ENCODE measurements at regions of chr7 and their contacts with region 1.

Region 1: GRCh38 chr7:55255496-55256435 is 109.4 kb upstream of the LANCL2 start:
- DNase-seq: peak; percentile 59
- ATAC-seq: peak; percentile 91
- H3K4me3 ChIP-seq: peak overlapping the region; percentile 56 to 88
- H3K27ac ChIP-seq: peak overlapping the region; percentile 80
- H3K4me1 ChIP-seq: peaks cover 7% of the 10 kb centered on the region
- H3K27me3 ChIP-seq: peaks cover 3% of the 10 kb centered on the region; the same call in 1 of the 2 replicates
- CTCF ChIP-seq: peak; percentile 97

Region 2: GRCh38 chr7:54773472-54774399 is 482.0 kb before region 1 on chr7:
- CTCF ChIA-PET with region 1: interaction called, 23 read pairs
- POLR2A ChIA-PET with region 1: no interaction called
- in situ Hi-C with region 1: no loop called
- intact Hi-C with region 1: loop called (anchors 1 kb)
- DNase-seq: peak; percentile 91
- ATAC-seq: peak; percentile 99
- H3K4me3 ChIP-seq: peak overlapping the region; percentile 46 to 59
- H3K27ac ChIP-seq: peak overlapping the region; percentile 66
- H3K4me1 ChIP-seq: no peaks in the 10 kb centered on the region
- H3K27me3 ChIP-seq: peaks cover 5% of the 10 kb centered on the region; the same call in 1 of the 2 replicates
- CTCF ChIP-seq: peak; percentile 96

Region 3: DNA sequence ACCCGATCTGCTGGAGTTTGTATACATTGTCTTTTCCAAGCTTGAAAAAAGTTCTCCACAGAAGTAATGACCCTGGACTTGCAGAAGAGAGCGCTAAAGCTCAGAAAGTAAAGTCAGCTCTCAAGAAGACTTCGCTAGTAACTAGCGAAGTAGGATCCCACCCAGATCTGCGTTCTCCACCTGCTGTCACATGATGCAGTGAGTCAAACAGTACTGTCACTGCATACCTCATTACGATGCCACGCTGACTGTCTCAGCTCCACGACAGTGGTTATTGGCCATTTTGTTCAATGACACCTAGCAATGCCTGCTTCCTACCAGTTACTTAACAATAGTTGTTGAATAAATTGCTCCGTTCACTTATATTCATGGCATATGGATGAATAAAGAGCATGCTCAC is 467.1 kb before region 1 on chr7:
- CTCF ChIA-PET with region 1: interaction called, 13 read pairs
- POLR2A ChIA-PET with region 1: no interaction called
- in situ Hi-C with region 1: no loop called
- intact Hi-C with region 1: loop called (anchors 1 kb)
- DNase-seq: peak; percentile 94
- ATAC-seq: peak; percentile 93
- H3K4me3 ChIP-seq: peak overlapping the region in 1 of 2 experiments; percentile 44; a peak in 2 of 4 replicates
- H3K27ac ChIP-seq: 0 out of 2 replicates have a peak overlapping the region, but pooled peaks have one; percentile 14
- H3K4me1 ChIP-seq: peaks cover 5% of the 10 kb centered on the region; the same call in 1 of the 2 replicates
- H3K27me3 ChIP-seq: no peaks in the 10 kb centered on the region
- CTCF ChIP-seq: peak; percentile 87

Region 4: DNA sequence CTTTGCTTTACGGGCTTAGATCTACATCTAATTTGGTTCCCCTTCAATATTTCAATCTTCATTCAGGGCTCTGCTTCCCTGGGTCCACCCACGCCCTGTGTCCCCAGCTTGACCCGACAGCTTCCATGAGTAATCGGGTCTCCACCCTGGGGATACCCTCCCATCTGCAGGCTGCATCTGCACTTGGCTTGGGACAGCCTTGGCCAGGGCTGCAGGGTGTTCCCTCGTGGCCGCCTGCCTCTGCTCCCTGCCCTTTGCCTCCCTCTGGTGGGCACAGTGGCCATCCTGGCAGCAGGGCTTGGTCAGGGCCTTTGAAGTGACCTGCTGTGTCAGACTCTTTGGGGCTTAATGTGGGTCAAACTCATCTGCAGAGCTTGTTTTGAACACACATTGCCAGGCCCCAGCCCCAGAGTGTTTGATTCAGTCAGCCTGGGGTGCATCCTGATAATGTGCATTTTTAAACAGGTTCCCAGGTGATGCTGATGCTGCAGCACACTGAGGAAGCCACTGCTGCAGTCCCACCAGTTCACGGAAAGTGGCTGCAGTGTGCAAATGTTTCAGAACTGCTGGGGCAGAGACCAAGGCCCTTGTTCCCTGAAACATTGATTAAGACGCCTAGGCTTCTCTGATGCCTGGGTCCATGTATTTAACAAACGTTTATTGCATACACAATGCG is 416.1 kb before region 1 on chr7:
- CTCF ChIA-PET with region 1: interaction called, 3 read pairs
- POLR2A ChIA-PET with region 1: interaction called, 3 read pairs
- in situ Hi-C with region 1: no loop called
- intact Hi-C with region 1: loop called (anchors 2 kb)
- DNase-seq: no peak
- ATAC-seq: peak; percentile 98
- H3K4me3 ChIP-seq: no peak overlapping the region
- H3K27ac ChIP-seq: no peak overlapping the region
- H3K4me1 ChIP-seq: no peaks in the 10 kb centered on the region
- H3K27me3 ChIP-seq: no peaks in the 10 kb centered on the region
- CTCF ChIP-seq: peak; percentile 94

Region 5: GRCh38 chr7:55018361-55019190 is 237.2 kb before region 1 on chr7 and contains the start of gene EGFR:
- CTCF ChIA-PET with region 1: interaction called, 3 read pairs
- POLR2A ChIA-PET with region 1: no interaction called
- in situ Hi-C with region 1: no loop called
- intact Hi-C with region 1: loop called (anchors 10 kb)
- DNase-seq: no peak
- ATAC-seq: peak; percentile 94
- H3K4me3 ChIP-seq: peak within 1 kb of the TSS; percentile 74 to 85
- H3K27ac ChIP-seq: peak within 1 kb of the TSS; percentile 91
- H3K4me1 ChIP-seq: peaks cover 31% of the 10 kb centered on the region
- H3K27me3 ChIP-seq: no peaks in the 10 kb centered on the region
- CTCF ChIP-seq: no peak
- total RNA-seq, gene EGFR: 156 TPM

Region 6: DNA sequence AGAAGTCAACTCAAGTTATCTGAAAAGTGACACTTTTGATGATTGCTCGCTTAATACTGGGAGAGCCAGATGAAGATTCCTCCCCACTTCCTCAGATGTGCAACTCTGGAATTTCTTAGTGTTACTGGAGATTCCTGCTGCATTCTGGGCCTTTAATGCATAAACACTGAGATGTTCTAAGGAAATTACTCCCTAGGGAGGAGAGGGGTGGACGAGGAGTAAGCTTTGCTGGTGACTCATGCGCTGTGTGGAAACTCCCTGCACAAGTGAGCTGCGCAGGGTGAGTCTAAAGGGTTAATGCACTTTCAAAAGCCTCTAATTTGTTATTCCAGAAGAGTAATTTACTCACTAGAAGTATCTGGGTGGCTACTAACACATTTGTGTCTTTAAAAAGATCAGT is 190.7 kb before region 1 on chr7:
- CTCF ChIA-PET with region 1: interaction called, 5 read pairs
- POLR2A ChIA-PET with region 1: no interaction called
- in situ Hi-C with region 1: no loop called
- intact Hi-C with region 1: loop called (anchors 5 kb)
- DNase-seq: peak; percentile 89
- ATAC-seq: peak; percentile 88
- H3K4me3 ChIP-seq: peak overlapping the region in 1 of 2 experiments; percentile 48; a peak in 3 of 4 replicates
- H3K27ac ChIP-seq: peak overlapping the region; percentile 100
- H3K4me1 ChIP-seq: peaks cover 96% of the 10 kb centered on the region
- H3K27me3 ChIP-seq: no peaks in the 10 kb centered on the region
- CTCF ChIP-seq: no peak

Region 7: GRCh38 chr7:55132890-55133551 is 122.7 kb before region 1 on chr7:
- CTCF ChIA-PET with region 1: interaction called, 3 read pairs
- POLR2A ChIA-PET with region 1: no interaction called
- in situ Hi-C with region 1: no loop called
- intact Hi-C with region 1: loop called (anchors 10 kb)
- DNase-seq: peak; percentile 99
- ATAC-seq: peak; percentile 86
- H3K4me3 ChIP-seq: peak overlapping the region in 1 of 2 experiments; percentile 35; a peak in 2 of 4 replicates
- H3K27ac ChIP-seq: peak overlapping the region; percentile 99
- H3K4me1 ChIP-seq: peaks cover 71% of the 10 kb centered on the region
- H3K27me3 ChIP-seq: no peaks in the 10 kb centered on the region
- CTCF ChIP-seq: no peak

Region 8: GRCh38 chr7:55158541-55159382 is 97.0 kb before region 1 on chr7:
- CTCF ChIA-PET with region 1: no interaction called
- POLR2A ChIA-PET with region 1: no interaction called
- in situ Hi-C with region 1: no loop called
- intact Hi-C with region 1: no loop called
- DNase-seq: no peak
- ATAC-seq: no peak
- H3K4me3 ChIP-seq: no peak overlapping the region
- H3K27ac ChIP-seq: no peak overlapping the region
- H3K4me1 ChIP-seq: no peaks in the 10 kb centered on the region
- H3K27me3 ChIP-seq: no peaks in the 10 kb centered on the region
- CTCF ChIP-seq: no peak